Endothelial cell of umbilical vein (primary cell): ENCODE measurements at regions of chrX and their contacts with region 1.

Region 1: GRCh38 chrX:48957827-48958634 is 624 bp upstream of the OTUD5 start:
- DNase-seq: peak; percentile 97
- H3K4me3 ChIP-seq: peak overlapping the region; percentile 15 to 71 (median 56)
- H3K27ac ChIP-seq: peak overlapping the region; percentile 87
- H3K4me1 ChIP-seq: peaks cover 16% of the 10 kb centered on the region
- H3K27me3 ChIP-seq: no peaks in the 10 kb centered on the region
- CTCF ChIP-seq: no peak
- POLR2A ChIP-seq: peak; percentile 34

Region 2: DNA sequence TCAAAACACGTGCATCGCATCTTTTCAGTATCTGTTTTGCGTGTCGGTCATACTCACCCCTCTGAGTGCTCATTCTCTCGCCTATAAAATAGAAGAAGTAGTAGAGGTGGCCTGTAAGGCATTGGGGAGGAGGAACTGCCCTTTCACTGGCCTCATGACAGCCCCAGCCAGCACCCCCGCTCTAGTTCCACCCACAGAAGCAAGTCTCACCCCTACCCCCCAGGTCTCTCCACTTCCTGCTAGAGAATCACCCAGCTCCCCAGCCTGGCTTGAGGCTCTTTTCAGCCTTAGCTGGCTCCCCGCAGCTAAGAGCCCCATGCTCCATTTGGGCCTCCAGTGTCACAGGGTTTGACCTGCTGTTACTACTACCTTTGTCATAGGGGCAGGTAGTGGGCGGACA is 144.4 kb before region 1 on chrX:
- CTCF ChIA-PET with region 1: no interaction called
- POLR2A ChIA-PET with region 1: no interaction called
- dilution Hi-C with region 1: no loop called
- intact Hi-C with region 1: no loop called
- DNase-seq: no peak
- H3K4me3 ChIP-seq: no peak overlapping the region
- H3K27ac ChIP-seq: no peak overlapping the region
- H3K4me1 ChIP-seq: no peaks in the 10 kb centered on the region
- H3K27me3 ChIP-seq: no peaks in the 10 kb centered on the region
- CTCF ChIP-seq: no peak
- POLR2A ChIP-seq: no peak

Region 3: GRCh38 chrX:48891402-48892288 is 66.4 kb before region 1 on chrX:
- CTCF ChIA-PET with region 1: no interaction called
- POLR2A ChIA-PET with region 1: no interaction called
- dilution Hi-C with region 1: no loop called
- intact Hi-C with region 1: loop called (anchors 1 kb)
- DNase-seq: peak; percentile 80
- H3K4me3 ChIP-seq: peak overlapping the region; percentile 15 to 58 (median 46)
- H3K27ac ChIP-seq: no peak overlapping the region
- H3K4me1 ChIP-seq: peaks cover 7% of the 10 kb centered on the region
- H3K27me3 ChIP-seq: no peaks in the 10 kb centered on the region
- CTCF ChIP-seq: peak; percentile 29 to 59
- POLR2A ChIP-seq: no peak

Region 4: GRCh38 chrX:48917139-48918001 is 40.7 kb before region 1 on chrX:
- CTCF ChIA-PET with region 1: no interaction called
- POLR2A ChIA-PET with region 1: no interaction called
- dilution Hi-C with region 1: no loop called
- intact Hi-C with region 1: loop called (anchors 1 kb)
- DNase-seq: peak; percentile 93
- H3K4me3 ChIP-seq: no peak overlapping the region
- H3K27ac ChIP-seq: no peak overlapping the region
- H3K4me1 ChIP-seq: peaks cover 2% of the 10 kb centered on the region
- H3K27me3 ChIP-seq: no peaks in the 10 kb centered on the region
- CTCF ChIP-seq: peak; percentile 91 to 95
- POLR2A ChIP-seq: no peak

Region 5: DNA sequence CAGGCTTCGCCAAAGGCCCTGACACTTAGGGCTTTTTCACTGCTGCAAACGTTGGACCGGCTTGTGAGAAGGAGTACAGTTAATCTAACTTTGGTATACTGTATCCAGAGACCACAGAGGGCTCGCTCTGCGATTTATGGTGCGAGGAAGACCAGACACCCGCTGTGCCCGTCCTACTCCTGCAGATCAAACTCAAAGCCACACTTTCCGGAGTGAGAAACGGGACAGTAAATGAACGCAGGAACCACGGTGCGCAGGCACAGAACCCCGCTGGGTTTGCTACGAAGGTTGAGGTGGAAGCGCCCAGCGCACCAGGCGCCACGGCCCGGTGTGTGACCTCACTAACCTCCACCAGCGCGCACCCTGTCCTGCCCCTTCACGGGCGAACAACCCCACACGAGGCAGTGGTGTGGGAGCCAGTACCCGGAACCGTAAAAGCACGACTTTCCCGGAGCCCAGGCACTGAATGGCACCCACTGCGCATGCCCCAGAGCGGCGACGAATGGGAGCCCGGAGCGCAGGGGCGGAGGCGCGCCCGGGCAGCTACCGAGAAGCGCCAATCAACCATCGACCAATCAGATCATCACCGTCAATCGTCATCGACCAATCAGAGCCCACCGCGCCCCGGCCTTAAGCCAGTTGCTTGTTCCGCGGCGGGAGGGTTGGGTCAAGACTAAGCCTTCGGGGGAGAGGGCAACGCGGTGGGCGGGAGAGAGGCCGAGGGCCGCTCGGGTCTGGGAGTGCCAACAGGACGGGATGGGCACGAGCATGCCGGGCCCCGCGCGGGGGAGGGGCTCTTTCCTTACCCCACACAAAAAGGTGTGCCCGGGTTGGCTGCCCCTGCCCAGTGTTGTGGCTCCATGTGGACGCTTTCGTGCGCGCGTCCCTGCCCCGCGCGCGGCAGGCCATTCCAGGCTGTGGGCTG is 142.9 kb after region 1 on chrX:
- CTCF ChIA-PET with region 1: no interaction called
- POLR2A ChIA-PET with region 1: no interaction called
- dilution Hi-C with region 1: no loop called
- intact Hi-C with region 1: loop called (anchors 5 kb)
- DNase-seq: peak; percentile 94
- H3K4me3 ChIP-seq: peak overlapping the region; percentile 35 to 54 (median 50)
- H3K27ac ChIP-seq: no peak overlapping the region
- H3K4me1 ChIP-seq: no peaks in the 10 kb centered on the region
- H3K27me3 ChIP-seq: no peaks in the 10 kb centered on the region
- CTCF ChIP-seq: no peak
- POLR2A ChIP-seq: peak; percentile 39